ENCODE measurements at regions of chr11 and their contacts with region 1.

Region 1: GRCh38 chr11:94721565-94722292 is 46.4 kb upstream of the AMOTL1 start:
- DNase-seq: no peak
- ATAC-seq: peak; percentile 60 to 94 (median 86)
- H3K4me3 ChIP-seq: no peak overlapping the region
- H3K27ac ChIP-seq: peak overlapping the region; percentile 33
- H3K4me1 ChIP-seq: peaks cover 27% of the 10 kb centered on the region
- H3K27me3 ChIP-seq: no peaks in the 10 kb centered on the region
- CTCF ChIP-seq: no peak

Region 2: GRCh38 chr11:94741022-94741679 is 19.4 kb after region 1 on chr11:
- intact Hi-C with region 1: loop called in 1 of 2 experiments (anchors 2 kb)
- DNase-seq: peak; percentile 34 to 70
- ATAC-seq: peak; percentile 86 to 94 (median 91)
- H3K4me3 ChIP-seq: peak overlapping the region; percentile 70
- H3K27ac ChIP-seq: peak overlapping the region; percentile 65
- H3K4me1 ChIP-seq: peaks cover 22% of the 10 kb centered on the region
- H3K27me3 ChIP-seq: no peaks in the 10 kb centered on the region
- CTCF ChIP-seq: peak; percentile 54